GM12878 (cell line): ENCODE measurements at regions of chr18 and their contacts with region 1.

Region 1: DNA sequence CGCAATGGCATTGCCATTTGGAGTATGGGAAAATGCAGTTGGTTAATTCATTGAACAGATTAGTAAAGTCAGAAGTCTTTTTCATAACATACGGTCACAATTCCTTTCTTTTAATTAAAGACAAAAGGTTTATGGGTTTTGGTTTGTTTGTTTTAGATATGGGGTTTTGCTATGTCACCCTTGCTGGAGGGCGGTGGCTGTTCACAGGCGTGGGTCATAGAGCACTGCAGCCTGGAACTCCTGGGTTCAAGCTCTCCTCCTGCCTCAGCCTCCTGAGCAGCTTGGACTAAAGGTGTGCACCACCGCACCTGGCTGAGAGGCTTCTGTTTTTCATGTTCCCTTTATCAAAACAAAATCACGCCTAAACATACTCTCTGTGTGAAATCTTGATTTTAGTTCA is 18.7 kb upstream of the ELAC1 start:
- DNase-seq: no peak
- ATAC-seq: no peak
- H3K4me3 ChIP-seq: no peak overlapping the region
- H3K27ac ChIP-seq: no peak overlapping the region
- H3K4me1 ChIP-seq: no peaks in the 10 kb centered on the region
- H3K27me3 ChIP-seq: no peaks in the 10 kb centered on the region
- CTCF ChIP-seq: no peak
- EP300 ChIP-seq: no peak
- POLR2A ChIP-seq: no peak
- RAD21 ChIP-seq: no peak

Region 2: DNA sequence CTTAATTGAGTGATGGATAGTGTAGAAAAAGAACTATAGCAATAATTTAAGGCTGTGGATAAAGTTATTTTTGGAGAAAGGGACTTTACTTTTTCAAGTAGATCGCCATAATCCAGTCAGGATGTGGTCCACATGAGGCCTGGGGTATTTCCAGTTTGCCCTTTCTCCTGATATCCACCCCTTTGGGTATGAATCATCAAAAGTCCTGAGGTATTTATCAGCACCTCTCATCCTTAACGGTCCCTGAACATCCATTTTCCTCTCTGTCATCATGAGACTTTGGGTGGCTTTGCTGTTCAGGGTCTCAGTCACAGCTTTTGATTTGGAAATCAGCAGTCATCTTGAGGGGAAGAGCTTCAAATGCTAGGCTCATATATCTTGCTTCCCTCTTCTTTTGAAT is 20.6 kb before region 1 on chr18:
- CTCF ChIA-PET with region 1: no interaction called
- POLR2A ChIA-PET with region 1: no interaction called
- RAD21 ChIA-PET with region 1: no interaction called
- SMC1A ChIA-PET with region 1: no interaction called
- in situ Hi-C with region 1: no loop called
- intact Hi-C with region 1: no loop called
- DNase-seq: no peak
- ATAC-seq: no peak
- H3K4me3 ChIP-seq: no peak overlapping the region
- H3K27ac ChIP-seq: no peak overlapping the region
- H3K4me1 ChIP-seq: no peaks in the 10 kb centered on the region
- H3K27me3 ChIP-seq: no peaks in the 10 kb centered on the region
- CTCF ChIP-seq: no peak
- EP300 ChIP-seq: no peak
- POLR2A ChIP-seq: no peak
- RAD21 ChIP-seq: no peak

Region 3: DNA sequence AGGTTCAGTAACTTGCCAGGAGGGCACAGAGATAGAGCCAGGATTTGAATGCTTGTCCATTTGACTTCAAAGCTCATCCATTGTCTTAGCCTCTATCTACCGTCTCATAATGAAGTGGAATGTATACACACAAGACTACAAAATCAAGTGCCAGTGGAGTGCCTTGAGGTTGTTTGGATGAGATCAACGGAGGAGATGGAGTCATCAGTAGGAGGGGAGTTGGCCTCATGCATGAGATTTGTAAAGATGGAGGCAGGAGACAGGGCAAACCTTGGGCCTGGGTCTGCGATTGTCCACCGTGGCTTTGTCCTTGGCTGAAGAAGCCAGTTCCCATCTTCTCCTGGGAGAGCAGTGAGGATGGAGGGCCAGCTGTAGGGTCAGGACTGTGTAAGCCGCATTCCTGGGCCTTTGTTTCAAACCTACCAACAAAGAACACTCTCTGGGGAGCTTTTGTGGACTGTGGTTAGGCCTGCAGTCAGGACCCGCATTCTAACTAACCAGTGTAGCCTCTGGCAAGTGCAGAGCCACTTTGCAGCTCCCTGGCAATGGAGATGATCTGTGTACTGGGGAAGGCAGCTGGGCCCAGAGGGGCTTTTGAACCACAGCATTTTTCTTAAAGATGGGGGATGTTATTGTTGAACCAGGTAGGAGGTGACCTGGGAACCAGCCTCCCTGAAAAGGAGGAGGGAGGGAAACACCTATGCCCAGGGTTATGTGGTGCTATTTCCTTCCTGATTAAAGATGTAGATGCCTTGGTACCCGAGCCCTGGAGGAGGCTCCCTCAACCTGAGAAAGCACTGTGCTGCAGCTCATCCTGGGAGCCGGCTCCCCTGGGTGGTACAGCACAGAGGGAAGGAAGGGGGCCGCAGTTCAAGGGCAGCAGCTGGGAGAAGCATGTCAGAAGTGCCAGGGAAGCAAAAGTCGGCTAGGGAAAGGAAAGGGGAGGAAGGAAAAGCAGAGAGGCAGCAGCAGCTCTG is 68.0 kb after region 1 on chr18:
- CTCF ChIA-PET with region 1: no interaction called
- POLR2A ChIA-PET with region 1: interaction called, 10 read pairs
- RAD21 ChIA-PET with region 1: no interaction called
- SMC1A ChIA-PET with region 1: no interaction called
- in situ Hi-C with region 1: no loop called
- intact Hi-C with region 1: no loop called
- DNase-seq: no peak
- ATAC-seq: no peak
- H3K4me3 ChIP-seq: no peak overlapping the region
- H3K27ac ChIP-seq: no peak overlapping the region
- H3K4me1 ChIP-seq: no peaks in the 10 kb centered on the region
- H3K27me3 ChIP-seq: no peaks in the 10 kb centered on the region
- CTCF ChIP-seq: no peak
- EP300 ChIP-seq: no peak
- POLR2A ChIP-seq: no peak
- RAD21 ChIP-seq: no peak